Activated naive CD4-positive, alpha-beta T cell treated with anti-CD3 and anti-CD28 coated beads for 36 hours (primary cell): ENCODE measurements at regions of chr4 and their contacts with region 1.

Region 1: GRCh38 chr4:151276787-151277562 is at the start of gene PRSS48:
- DNase-seq: peak; percentile 73
- H3K4me3 Mint-ChIP-seq: no peak within 1 kb of the TSS
- H3K27ac Mint-ChIP-seq: no peak within 1 kb of the TSS
- H3K4me1 Mint-ChIP-seq: no peaks in the 10 kb centered on the region
- H3K27me3 Mint-ChIP-seq: peaks cover 10% of the 10 kb centered on the region
- total RNA-seq, gene PRSS48: not detected

Region 2: DNA sequence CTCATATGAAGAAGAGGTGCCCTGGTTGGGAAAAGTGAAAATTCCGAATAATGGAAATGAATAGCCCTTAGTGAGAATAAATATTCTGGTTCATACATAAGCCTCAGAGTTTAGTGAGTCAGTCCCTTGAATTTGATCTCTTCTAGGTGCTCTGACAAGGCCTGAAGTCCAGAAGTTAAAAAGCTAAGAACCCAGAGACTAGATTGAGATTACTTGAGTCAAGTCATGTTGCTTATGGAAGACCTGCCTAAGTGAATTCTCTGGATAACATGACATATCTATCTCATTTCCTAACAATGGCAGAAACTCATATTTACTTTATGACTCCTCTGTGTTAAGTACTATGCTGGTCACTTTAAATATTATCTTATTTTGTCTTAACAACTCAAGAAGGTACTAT is 10.5 kb before region 1 on chr4:
- CTCF ChIA-PET with region 1: interaction called, 13 read pairs
- intact Hi-C with region 1: no loop called
- DNase-seq: no peak
- H3K4me3 Mint-ChIP-seq: no peak overlapping the region
- H3K27ac Mint-ChIP-seq: no peak overlapping the region
- H3K4me1 Mint-ChIP-seq: no peaks in the 10 kb centered on the region
- H3K27me3 Mint-ChIP-seq: peaks cover 2% of the 10 kb centered on the region

Region 3: DNA sequence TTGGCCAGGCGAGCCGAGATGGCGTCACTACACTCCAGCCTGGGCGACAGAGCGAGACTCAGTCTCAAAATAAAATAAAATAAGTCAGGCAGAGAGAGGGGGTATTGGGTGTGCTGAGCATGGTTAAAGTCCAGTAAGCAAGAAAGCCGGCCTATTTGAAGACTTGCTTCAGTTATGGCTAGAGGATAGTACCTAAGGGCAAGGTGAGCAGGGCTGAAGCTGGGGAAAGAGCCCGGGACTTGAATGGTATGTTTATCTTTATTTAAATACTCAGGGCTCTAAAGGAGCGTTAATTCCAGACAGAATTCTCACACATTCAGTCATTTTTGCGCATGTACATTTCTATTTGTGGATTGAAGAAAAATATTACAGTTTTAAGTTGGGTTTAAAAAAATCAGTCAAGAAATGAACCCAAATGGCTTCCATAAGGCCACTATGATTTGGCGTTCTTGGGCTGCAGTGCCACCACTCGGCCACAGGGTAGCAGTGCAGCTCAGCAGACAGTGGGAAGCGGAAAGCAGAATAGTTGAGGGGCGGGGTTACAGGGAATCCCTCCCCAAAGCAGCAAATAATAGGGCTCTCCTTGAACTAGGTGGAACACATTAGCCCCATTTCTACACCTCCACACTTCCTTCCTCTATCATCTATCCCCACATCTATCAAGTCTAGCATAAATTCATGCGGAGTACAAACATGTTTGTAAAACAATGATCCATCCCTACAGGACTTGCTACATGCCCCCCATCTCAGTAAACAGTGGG is 85.6 kb after region 1 on chr4:
- CTCF ChIA-PET with region 1: interaction called, 5 read pairs
- intact Hi-C with region 1: loop called (anchors 1 kb)
- DNase-seq: peak; percentile 90
- H3K4me3 Mint-ChIP-seq: no peak overlapping the region
- H3K27ac Mint-ChIP-seq: no peak overlapping the region
- H3K4me1 Mint-ChIP-seq: no peaks in the 10 kb centered on the region
- H3K27me3 Mint-ChIP-seq: no peaks in the 10 kb centered on the region

Region 4: GRCh38 chr4:151517896-151518295 is 240.9 kb after region 1 on chr4:
- CTCF ChIA-PET with region 1: no interaction called
- intact Hi-C with region 1: loop called (anchors 10 kb)
- DNase-seq: no peak
- H3K4me3 Mint-ChIP-seq: no peak overlapping the region
- H3K27ac Mint-ChIP-seq: no peak overlapping the region
- H3K4me1 Mint-ChIP-seq: no peaks in the 10 kb centered on the region
- H3K27me3 Mint-ChIP-seq: no peaks in the 10 kb centered on the region

Region 5: GRCh38 chr4:151604238-151604637 is 327.3 kb after region 1 on chr4:
- CTCF ChIA-PET with region 1: no interaction called
- intact Hi-C with region 1: loop called (anchors 2 kb)
- DNase-seq: no peak
- H3K4me3 Mint-ChIP-seq: no peak overlapping the region
- H3K27ac Mint-ChIP-seq: no peak overlapping the region
- H3K4me1 Mint-ChIP-seq: no peaks in the 10 kb centered on the region
- H3K27me3 Mint-ChIP-seq: no peaks in the 10 kb centered on the region

Region 6: GRCh38 chr4:152385551-152385950 is 1108.6 kb after region 1 on chr4:
- CTCF ChIA-PET with region 1: no interaction called
- intact Hi-C with region 1: loop called (anchors 10 kb)
- DNase-seq: peak; percentile 10
- H3K4me3 Mint-ChIP-seq: no peak overlapping the region
- H3K27ac Mint-ChIP-seq: no peak overlapping the region
- H3K4me1 Mint-ChIP-seq: peaks cover 13% of the 10 kb centered on the region
- H3K27me3 Mint-ChIP-seq: no peaks in the 10 kb centered on the region

Region 7: GRCh38 chr4:152535903-152536544 is 1259.0 kb after region 1 on chr4 and contains the start of gene FBXW7:
- CTCF ChIA-PET with region 1: no interaction called
- intact Hi-C with region 1: no loop called
- DNase-seq: peak; percentile 100
- H3K4me3 Mint-ChIP-seq: peak within 1 kb of the TSS; percentile 87
- H3K27ac Mint-ChIP-seq: peak within 1 kb of the TSS; percentile 97
- H3K4me1 Mint-ChIP-seq: peaks cover 56% of the 10 kb centered on the region
- H3K27me3 Mint-ChIP-seq: no peaks in the 10 kb centered on the region
- total RNA-seq, gene FBXW7: 26.7 to 29.2 TPM